ENCODE measurements at regions of chr7 and their contacts with region 1.

Region 1: DNA sequence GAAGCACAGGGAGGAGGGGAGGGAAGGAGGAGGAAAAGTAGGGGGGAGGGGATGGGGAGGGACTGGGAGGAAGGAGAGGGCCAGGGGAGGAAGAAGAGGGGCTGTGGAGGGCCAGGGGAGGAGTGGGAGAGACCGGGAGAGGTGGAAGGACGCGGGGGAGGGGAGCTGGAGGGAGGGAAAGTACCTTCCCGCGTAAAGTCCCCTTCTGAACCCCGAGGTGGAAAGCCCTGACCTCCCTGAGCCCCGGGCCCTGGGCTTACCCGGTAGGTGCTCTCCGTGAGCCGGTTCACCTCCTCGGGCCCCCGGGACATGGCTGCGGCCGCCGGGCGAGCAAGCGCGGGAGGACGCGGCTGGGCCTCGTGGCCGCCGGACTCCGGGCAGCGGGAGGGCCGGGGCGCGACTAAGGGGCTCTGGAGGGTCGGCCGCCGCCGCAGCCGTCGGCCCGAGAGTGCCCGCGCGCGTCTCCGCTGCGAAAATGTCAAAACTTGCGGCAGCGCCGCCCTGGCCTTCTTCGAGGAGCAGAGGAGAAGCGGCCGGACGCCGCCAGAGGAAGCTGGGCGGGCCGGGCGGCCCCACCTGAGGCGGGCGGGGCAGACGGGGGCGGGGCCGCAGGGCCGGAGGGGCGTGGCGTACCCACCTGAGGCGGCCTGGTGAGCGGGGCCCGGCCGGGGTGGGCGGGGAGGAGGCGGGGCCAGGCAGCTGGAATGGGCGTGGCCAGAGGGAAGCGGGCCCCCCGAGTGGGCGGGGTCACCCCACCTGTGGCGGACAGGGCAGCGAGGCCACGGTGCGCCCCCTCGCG is at the start of gene BAIAP2L1:
- DNase-seq: peak; percentile 94 to 98 (median 96)
- H3K4me3 ChIP-seq: peak within 1 kb of the TSS; percentile 53 to 60 (median 53)
- H3K27ac ChIP-seq: peak within 1 kb of the TSS in 1 of 2 donors; percentile 37
- H3K4me1 ChIP-seq: peaks cover 0 to 3% (median 0%) of the 10 kb centered on the region in 3 donors
- H3K27me3 ChIP-seq: no peaks in the 10 kb centered on the region
- CTCF ChIP-seq: no peak
- total RNA-seq, gene BAIAP2L1: 18.8 TPM

Region 2: GRCh38 chr7:98294796-98295382 is 105.9 kb before region 1 on chr7:
- intact Hi-C with region 1: loop called (anchors 10 kb)
- DNase-seq: peak; percentile 71 to 82 (median 79)
- H3K4me3 ChIP-seq: no peak overlapping the region
- H3K27ac ChIP-seq: no peak overlapping the region
- H3K4me1 ChIP-seq: peaks cover 0 to 3% (median 0%) of the 10 kb centered on the region in 3 donors
- H3K27me3 ChIP-seq: no peaks in the 10 kb centered on the region
- CTCF ChIP-seq: peak; percentile 54

Measured in kidney (tissue), 22 donors.